Activated naive CD8-positive, alpha-beta T cell treated with anti-CD3 and anti-CD28 coated beads, Interleukin-2, amount 10 ng/mL, durations not matched to agents 7 days and 5 days (primary cell): ENCODE measurements at regions of chr2 and their contacts with region 1.

Region 1: DNA sequence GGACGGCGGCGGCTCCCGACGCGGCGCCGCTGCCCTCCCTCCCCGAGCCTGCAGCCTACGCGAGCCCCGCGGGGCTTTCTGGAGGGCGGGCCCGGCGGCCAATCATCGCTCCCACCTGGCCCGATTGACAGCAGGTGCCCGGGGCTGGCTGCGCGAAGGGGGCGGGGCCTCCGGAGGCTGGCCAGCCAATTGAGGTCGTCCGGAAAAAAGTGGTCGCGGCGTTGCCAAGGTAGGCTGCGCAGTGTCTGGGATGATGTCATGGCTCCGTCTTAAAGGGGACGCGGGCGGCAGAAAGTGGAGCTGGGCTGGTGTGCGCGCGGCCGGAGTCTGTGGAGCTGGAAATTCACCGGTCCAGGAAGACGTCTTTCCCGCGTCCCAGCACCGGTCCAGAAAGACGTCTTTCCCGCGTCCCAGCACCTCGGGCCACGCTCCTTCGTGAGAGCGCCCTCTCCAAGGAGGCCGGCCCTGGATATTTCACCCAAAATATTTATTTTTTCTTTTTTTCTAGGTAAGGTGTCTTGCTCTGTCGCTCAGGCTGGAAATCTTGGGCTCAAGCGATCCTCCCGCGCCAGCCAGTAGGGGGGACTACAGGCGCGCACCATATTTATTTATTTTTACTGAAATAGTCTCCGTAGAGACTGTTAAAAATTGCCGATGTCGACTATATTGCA is at the start of gene ACTR1B:
- DNase-seq: peak; percentile 98
- ATAC-seq: peak; percentile 88
- H3K4me3 Mint-ChIP-seq: peak within 1 kb of the TSS; percentile 94
- H3K27ac Mint-ChIP-seq: peak within 1 kb of the TSS; percentile 94
- H3K4me1 Mint-ChIP-seq: peaks cover 14% of the 10 kb centered on the region
- H3K27me3 Mint-ChIP-seq: no peaks in the 10 kb centered on the region
- total RNA-seq, gene ACTR1B: 96.2 to 98.7 TPM

Region 2: GRCh38 chr2:97645695-97646629 is 18.1 kb before region 1 on chr2 and contains the start of gene COX5B:
- POLR2A ChIA-PET with region 1: interaction called, 184 read pairs
- DNase-seq: peak; percentile 95
- ATAC-seq: peak; percentile 97
- H3K4me3 Mint-ChIP-seq: peak within 1 kb of the TSS; percentile 94
- H3K27ac Mint-ChIP-seq: peak within 1 kb of the TSS; percentile 95
- H3K4me1 Mint-ChIP-seq: peaks cover 18% of the 10 kb centered on the region
- H3K27me3 Mint-ChIP-seq: peaks cover 2% of the 10 kb centered on the region
- total RNA-seq, gene COX5B: 190 to 192 TPM

Region 3: GRCh38 chr2:97697252-97698235 is 33.4 kb after region 1 on chr2:
- POLR2A ChIA-PET with region 1: interaction called, 28 read pairs
- DNase-seq: peak; percentile 93
- ATAC-seq: peak; percentile 90
- H3K4me3 Mint-ChIP-seq: peak overlapping the region; percentile 53
- H3K27ac Mint-ChIP-seq: peak overlapping the region; percentile 9
- H3K4me1 Mint-ChIP-seq: peaks cover 9% of the 10 kb centered on the region
- H3K27me3 Mint-ChIP-seq: peaks cover 16% of the 10 kb centered on the region

Region 4: DNA sequence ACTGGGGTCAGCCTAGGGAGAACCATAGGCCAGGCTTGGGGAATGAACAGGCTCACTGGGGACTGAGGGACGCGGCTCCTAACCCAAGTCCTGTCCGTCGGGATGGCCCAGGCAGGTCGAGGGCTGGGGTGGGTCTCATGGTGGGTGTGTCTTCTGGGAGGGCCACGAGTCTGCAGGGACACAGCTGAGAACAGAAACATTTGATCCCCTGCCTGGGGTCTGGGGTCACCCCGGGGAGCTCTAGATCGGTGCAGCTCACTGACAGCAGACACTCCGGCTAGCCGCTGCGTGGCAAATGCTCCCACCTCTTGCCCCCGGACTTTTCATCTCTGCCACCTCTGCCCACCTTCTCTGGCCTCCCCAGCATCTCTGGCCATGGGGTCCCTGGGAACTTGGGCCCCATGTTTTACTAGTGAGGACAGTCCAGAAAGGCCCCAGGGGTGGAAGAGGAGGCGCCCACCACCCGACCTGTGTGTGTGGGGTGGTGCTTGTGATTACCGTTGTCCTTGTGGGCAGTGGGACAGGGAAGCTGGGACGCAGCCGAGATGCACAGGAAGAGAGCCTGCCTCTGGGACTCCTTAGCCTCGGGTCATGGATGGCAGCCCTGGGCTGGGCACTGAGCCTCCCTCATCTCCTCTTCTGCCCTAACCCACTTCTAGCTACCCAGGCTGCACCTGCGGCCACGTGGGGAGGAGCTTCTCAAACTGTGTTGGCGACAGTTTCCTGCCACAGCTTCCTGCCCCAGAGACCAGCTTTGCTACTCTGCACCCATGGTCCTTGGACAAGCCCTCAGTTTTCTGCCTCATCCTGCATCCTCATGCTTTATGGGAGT is 54.2 kb after region 1 on chr2:
- POLR2A ChIA-PET with region 1: interaction called, 23 read pairs
- DNase-seq: peak; percentile 78
- ATAC-seq: peak; percentile 75
- H3K4me3 Mint-ChIP-seq: peak overlapping the region; percentile 98
- H3K27ac Mint-ChIP-seq: peak overlapping the region; percentile 100
- H3K4me1 Mint-ChIP-seq: peaks cover 58% of the 10 kb centered on the region
- H3K27me3 Mint-ChIP-seq: no peaks in the 10 kb centered on the region